ENCODE measurements at regions of chr17 and their contacts with region 1.

Region 1: GRCh38 chr17:57243171-57243948 is 13.0 kb upstream of the MSI2 start:
- DNase-seq: peak; percentile 83
- ATAC-seq: peak; percentile 92
- H3K4me3 Mint-ChIP-seq: no peak overlapping the region
- H3K27ac Mint-ChIP-seq: no peak overlapping the region
- H3K4me1 Mint-ChIP-seq: peaks cover 6% of the 10 kb centered on the region
- H3K27me3 Mint-ChIP-seq: no peaks in the 10 kb centered on the region; the same call in none of the 2 replicates
- CTCF ChIP-seq: peak; percentile 92

Region 2: GRCh38 chr17:57062865-57063264 is 180.5 kb before region 1 on chr17:
- CTCF ChIA-PET with region 1: no interaction called
- POLR2A ChIA-PET with region 1: no interaction called
- DNase-seq: no peak
- ATAC-seq: no peak
- H3K4me3 Mint-ChIP-seq: no peak overlapping the region
- H3K27ac Mint-ChIP-seq: no peak overlapping the region
- H3K4me1 Mint-ChIP-seq: peaks cover 12% of the 10 kb centered on the region
- H3K27me3 Mint-ChIP-seq: no peaks in the 10 kb centered on the region
- CTCF ChIP-seq: no peak

Region 3: DNA sequence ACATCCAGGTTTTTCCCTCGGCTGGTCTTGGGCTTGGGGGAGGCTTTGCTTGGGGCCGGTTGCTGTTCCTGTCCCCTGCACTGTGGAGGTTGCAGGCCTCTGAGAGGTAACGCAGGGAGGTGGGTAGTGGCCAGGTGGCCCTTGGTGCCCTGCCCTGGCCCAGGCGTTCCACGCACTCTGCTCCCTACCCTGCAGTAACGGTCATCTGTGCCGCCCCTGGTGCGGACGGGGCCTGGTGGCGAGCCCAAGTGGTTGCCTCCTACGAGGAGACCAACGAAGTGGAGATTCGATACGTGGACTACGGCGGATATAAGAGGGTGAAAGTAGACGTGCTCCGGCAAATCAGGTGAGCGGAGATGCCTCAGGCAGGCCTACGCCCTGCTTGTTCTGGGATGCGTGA is 127.4 kb before region 1 on chr17:
- CTCF ChIA-PET with region 1: no interaction called
- POLR2A ChIA-PET with region 1: no interaction called
- DNase-seq: no peak
- ATAC-seq: no peak
- H3K4me3 Mint-ChIP-seq: no peak overlapping the region
- H3K27ac Mint-ChIP-seq: no peak overlapping the region
- H3K4me1 Mint-ChIP-seq: peaks cover 17% of the 10 kb centered on the region
- H3K27me3 Mint-ChIP-seq: no peaks in the 10 kb centered on the region
- CTCF ChIP-seq: no peak

Region 4: GRCh38 chr17:57255776-57256681 is 12.7 kb after region 1 on chr17 and contains the start of gene MSI2:
- CTCF ChIA-PET with region 1: interaction called, 39 read pairs
- POLR2A ChIA-PET with region 1: interaction called, 3 read pairs
- DNase-seq: peak; percentile 82
- ATAC-seq: peak; percentile 67
- H3K4me3 Mint-ChIP-seq: peak within 1 kb of the TSS; percentile 93
- H3K27ac Mint-ChIP-seq: peak within 1 kb of the TSS; percentile 84; the same call in 1 of the 2 replicates
- H3K4me1 Mint-ChIP-seq: peaks cover 47% of the 10 kb centered on the region
- H3K27me3 Mint-ChIP-seq: peaks cover 15% of the 10 kb centered on the region
- CTCF ChIP-seq: no peak
- total RNA-seq, gene MSI2: 79.9 to 87.0 TPM (median 82.1 TPM) in 3 replicates

Region 5: GRCh38 chr17:57279432-57279831 is 36.1 kb after region 1 on chr17:
- CTCF ChIA-PET with region 1: interaction called, 12 read pairs
- POLR2A ChIA-PET with region 1: no interaction called
- DNase-seq: no peak
- ATAC-seq: no peak
- H3K4me3 Mint-ChIP-seq: no peak overlapping the region
- H3K27ac Mint-ChIP-seq: no peak overlapping the region
- H3K4me1 Mint-ChIP-seq: peaks cover 40% of the 10 kb centered on the region
- H3K27me3 Mint-ChIP-seq: no peaks in the 10 kb centered on the region
- CTCF ChIP-seq: no peak

Region 6: GRCh38 chr17:57357399-57357807 is 114.0 kb after region 1 on chr17:
- CTCF ChIA-PET with region 1: interaction called, 18 read pairs
- POLR2A ChIA-PET with region 1: no interaction called
- DNase-seq: no peak
- ATAC-seq: peak; percentile 46
- H3K4me3 Mint-ChIP-seq: no peak overlapping the region
- H3K27ac Mint-ChIP-seq: 0 out of 2 replicates have a peak overlapping the region, but pooled peaks have one; percentile 90
- H3K4me1 Mint-ChIP-seq: peaks cover 48% of the 10 kb centered on the region
- H3K27me3 Mint-ChIP-seq: no peaks in the 10 kb centered on the region
- CTCF ChIP-seq: no peak

Region 7: DNA sequence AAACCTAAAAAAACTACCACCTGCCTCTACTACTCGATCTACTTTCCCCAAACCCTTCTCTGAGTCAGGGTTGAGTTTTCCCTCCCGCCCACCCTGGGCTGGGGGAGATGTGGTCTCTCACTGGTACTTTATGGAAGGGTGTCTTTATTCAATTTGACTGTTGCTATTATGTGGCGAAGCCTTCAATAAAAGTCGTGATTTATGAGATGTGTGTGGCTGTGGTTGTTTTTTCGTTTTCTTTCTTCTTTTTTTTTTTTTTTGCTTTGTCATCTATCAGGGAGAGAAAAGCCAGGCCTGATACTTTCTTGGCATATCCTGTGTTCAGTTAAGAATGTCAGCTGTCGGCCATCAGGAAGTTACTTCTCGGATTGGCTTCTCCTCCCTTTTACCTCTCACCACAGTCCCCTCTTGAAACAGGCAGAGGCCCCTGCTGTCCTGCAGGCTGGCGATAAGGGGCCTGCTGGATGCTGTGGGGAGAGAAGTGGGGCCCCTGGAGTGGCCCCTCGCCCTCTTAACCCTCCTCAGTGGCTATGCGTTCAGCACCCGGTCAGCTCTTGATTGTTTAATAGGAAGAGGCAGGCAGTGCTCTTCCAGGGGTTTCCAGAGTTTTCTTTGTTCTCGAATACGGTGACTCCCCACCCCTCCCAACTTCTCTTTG is 136.0 kb after region 1 on chr17:
- CTCF ChIA-PET with region 1: no interaction called
- POLR2A ChIA-PET with region 1: no interaction called
- DNase-seq: no peak
- ATAC-seq: peak; percentile 73
- H3K4me3 Mint-ChIP-seq: no peak overlapping the region
- H3K27ac Mint-ChIP-seq: peak overlapping the region; percentile 82
- H3K4me1 Mint-ChIP-seq: peaks cover 54% of the 10 kb centered on the region
- H3K27me3 Mint-ChIP-seq: no peaks in the 10 kb centered on the region
- CTCF ChIP-seq: no peak

Region 8: DNA sequence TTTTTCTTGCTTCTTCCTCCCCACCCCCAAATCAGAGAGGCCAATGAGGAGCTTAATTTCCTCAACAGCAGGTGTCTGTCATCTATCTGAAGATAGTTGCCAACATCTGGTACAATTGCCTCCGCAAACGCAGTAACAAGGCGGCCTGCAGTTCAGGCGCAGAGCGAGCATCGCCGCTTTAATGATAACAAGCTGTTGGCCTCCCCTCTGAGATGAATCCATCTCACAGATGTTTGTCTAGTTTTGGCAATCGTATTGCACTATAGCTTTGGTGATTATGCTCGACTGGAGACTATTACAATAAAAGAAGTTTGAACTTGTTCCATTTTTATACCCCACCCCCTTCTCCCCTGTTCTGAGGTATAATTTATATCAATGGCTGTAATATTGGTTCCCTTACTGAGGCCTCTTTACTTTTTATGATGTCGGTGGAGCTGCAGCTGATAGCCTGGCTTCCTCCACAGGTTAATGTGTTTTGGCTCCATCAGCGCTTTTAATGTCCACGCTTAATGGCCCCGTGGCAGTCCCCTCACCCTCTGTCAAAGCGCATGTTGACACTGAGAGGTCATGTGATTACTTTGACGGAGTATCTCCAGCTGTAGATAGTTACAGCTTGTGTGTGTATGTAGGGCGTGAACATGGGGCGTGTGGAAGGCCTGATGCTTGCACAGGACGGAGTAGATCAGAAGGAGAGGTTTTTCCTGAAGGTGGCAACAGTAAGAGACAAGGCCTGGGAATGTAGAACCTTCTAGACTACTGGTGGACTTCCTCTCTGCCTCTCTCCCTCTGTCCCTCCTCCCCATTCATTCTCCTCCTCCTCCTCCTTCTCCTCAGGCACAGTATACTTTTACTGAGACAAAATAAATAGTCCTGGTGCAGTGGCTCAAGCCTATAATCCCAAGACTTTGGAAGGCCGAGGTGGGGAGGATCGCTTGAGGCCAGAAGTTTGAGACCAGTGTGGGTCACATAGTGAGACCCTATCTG is 177.7 kb after region 1 on chr17:
- CTCF ChIA-PET with region 1: interaction called, 18 read pairs
- POLR2A ChIA-PET with region 1: no interaction called
- DNase-seq: no peak
- ATAC-seq: no peak
- H3K4me3 Mint-ChIP-seq: no peak overlapping the region
- H3K27ac Mint-ChIP-seq: no peak overlapping the region
- H3K4me1 Mint-ChIP-seq: peaks cover 32% of the 10 kb centered on the region
- H3K27me3 Mint-ChIP-seq: no peaks in the 10 kb centered on the region
- CTCF ChIP-seq: no peak

Region 9: DNA sequence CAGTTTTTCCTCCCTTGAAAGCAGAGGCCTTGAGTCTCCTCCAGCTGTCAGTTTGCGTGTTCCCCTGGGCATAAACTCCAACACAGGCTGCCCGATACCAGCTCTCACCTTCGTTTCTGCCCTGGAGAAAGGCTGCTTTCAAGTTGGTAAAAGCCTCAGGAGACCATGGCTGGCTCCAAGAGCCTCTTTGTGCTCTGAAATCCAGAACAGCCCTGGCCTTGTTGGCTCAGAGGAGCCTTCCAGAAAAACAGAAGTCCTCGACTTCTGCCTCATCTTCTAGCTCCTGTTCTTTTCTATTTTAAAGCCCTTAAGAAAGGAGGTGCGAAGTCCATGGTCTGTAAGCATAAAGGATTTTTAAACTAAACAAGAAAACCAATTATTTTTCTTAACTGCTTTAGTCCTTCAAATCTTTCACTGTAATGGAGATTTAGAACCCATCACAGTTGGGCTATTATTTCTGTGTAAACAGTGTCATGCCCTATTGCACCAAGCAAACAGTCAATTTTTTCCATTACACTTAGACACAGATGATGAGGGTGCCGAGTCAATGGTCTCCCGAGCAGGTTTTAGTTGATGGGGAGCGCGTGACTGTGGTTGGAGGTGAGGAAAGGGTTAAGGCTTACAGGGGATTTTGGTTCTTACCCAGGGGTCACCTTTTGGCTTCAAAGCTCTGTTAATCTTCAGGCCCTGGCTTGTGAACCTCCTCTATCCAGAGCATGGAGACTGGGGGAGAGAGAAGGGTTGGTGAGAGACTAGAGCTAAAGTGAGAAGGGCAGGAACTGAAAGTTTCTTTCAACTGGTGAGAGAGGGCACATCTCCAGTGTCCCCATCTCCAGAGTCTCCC is 225.8 kb after region 1 on chr17:
- CTCF ChIA-PET with region 1: interaction called, 27 read pairs
- POLR2A ChIA-PET with region 1: no interaction called
- DNase-seq: no peak
- ATAC-seq: no peak
- H3K4me3 Mint-ChIP-seq: no peak overlapping the region
- H3K27ac Mint-ChIP-seq: no peak overlapping the region
- H3K4me1 Mint-ChIP-seq: peaks cover 90% of the 10 kb centered on the region
- H3K27me3 Mint-ChIP-seq: peaks cover 5% of the 10 kb centered on the region
- CTCF ChIP-seq: no peak

Region 10: GRCh38 chr17:57783106-57783742 is 539.9 kb after region 1 on chr17:
- CTCF ChIA-PET with region 1: interaction called, 17 read pairs
- POLR2A ChIA-PET with region 1: no interaction called
- DNase-seq: peak; percentile 95
- ATAC-seq: peak; percentile 95
- H3K4me3 Mint-ChIP-seq: peak overlapping the region; percentile 17
- H3K27ac Mint-ChIP-seq: no peak overlapping the region
- H3K4me1 Mint-ChIP-seq: peaks cover 9% of the 10 kb centered on the region
- H3K27me3 Mint-ChIP-seq: peaks cover 19% of the 10 kb centered on the region
- CTCF ChIP-seq: peak; percentile 93